GM12878 (cell line): ENCODE measurements at regions of chr1 and their contacts with region 1.

Region 1: GRCh38 chr1:56106531-56107275 is 472.7 kb downstream of the PLPP3 start:
- DNase-seq: peak; percentile 31
- ATAC-seq: peak; percentile 84
- H3K4me3 ChIP-seq: no peak overlapping the region
- H3K27ac ChIP-seq: no peak overlapping the region; the same call in 1 of the 2 replicates
- H3K4me1 ChIP-seq: peaks cover 6% of the 10 kb centered on the region; the same call in 1 of the 2 replicates
- H3K27me3 ChIP-seq: no peaks in the 10 kb centered on the region
- CTCF ChIP-seq: no peak
- EP300 ChIP-seq: no peak
- POLR2A ChIP-seq: no peak
- RAD21 ChIP-seq: peak; percentile 11; the same call in 1 of the 2 replicates

Region 2: DNA sequence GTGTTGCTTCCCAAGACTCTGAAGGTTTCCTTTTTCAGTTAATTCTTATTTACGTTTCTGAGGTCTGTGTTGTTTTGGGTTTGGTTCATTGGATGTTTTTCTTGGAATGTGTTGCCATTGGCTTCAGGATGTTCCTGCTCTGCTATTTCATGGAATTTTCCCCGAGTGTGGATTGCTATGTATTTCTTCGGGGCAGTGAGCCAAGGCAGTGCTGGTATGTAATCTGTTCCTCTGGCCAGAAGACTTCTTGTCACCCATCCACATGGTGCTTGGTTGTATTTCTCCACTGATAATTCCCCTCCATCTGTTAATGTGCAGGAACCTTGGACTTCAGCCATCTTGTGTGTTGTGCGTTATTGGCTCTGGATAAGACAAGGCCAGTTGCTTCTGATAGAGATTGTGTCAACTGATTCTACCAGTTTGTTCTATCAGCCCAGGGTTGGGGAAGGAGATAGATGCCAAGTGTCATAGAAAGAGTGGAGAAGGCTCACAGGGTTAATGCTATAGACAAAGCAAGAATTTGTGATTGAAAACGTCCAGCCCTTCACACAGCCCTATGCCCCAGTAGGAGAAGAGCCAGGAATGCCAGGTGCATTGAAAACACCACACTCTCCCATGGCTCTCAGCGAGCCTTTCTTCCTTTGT is 32.6 kb before region 1 on chr1:
- CTCF ChIA-PET with region 1: no interaction called
- POLR2A ChIA-PET with region 1: no interaction called
- RAD21 ChIA-PET with region 1: interaction called, 5 read pairs
- SMC1A ChIA-PET with region 1: interaction called, 23 read pairs
- in situ Hi-C with region 1: no loop called
- intact Hi-C with region 1: no loop called
- DNase-seq: no peak
- ATAC-seq: no peak
- H3K4me3 ChIP-seq: no peak overlapping the region
- H3K27ac ChIP-seq: no peak overlapping the region
- H3K4me1 ChIP-seq: no peaks in the 10 kb centered on the region
- H3K27me3 ChIP-seq: no peaks in the 10 kb centered on the region
- CTCF ChIP-seq: no peak
- EP300 ChIP-seq: no peak
- POLR2A ChIP-seq: no peak
- RAD21 ChIP-seq: no peak

Region 3: GRCh38 chr1:56095696-56096665 is 10.7 kb before region 1 on chr1:
- CTCF ChIA-PET with region 1: no interaction called
- POLR2A ChIA-PET with region 1: no interaction called
- RAD21 ChIA-PET with region 1: no interaction called
- SMC1A ChIA-PET with region 1: interaction called, 24 read pairs
- in situ Hi-C with region 1: no loop called
- intact Hi-C with region 1: no loop called
- DNase-seq: no peak
- ATAC-seq: no peak
- H3K4me3 ChIP-seq: no peak overlapping the region
- H3K27ac ChIP-seq: no peak overlapping the region
- H3K4me1 ChIP-seq: no peaks in the 10 kb centered on the region
- H3K27me3 ChIP-seq: no peaks in the 10 kb centered on the region
- CTCF ChIP-seq: no peak
- EP300 ChIP-seq: no peak
- POLR2A ChIP-seq: no peak
- RAD21 ChIP-seq: no peak